HCT116 (cell line): ENCODE measurements at regions of chr11 and their contacts with region 1.

Region 1: DNA sequence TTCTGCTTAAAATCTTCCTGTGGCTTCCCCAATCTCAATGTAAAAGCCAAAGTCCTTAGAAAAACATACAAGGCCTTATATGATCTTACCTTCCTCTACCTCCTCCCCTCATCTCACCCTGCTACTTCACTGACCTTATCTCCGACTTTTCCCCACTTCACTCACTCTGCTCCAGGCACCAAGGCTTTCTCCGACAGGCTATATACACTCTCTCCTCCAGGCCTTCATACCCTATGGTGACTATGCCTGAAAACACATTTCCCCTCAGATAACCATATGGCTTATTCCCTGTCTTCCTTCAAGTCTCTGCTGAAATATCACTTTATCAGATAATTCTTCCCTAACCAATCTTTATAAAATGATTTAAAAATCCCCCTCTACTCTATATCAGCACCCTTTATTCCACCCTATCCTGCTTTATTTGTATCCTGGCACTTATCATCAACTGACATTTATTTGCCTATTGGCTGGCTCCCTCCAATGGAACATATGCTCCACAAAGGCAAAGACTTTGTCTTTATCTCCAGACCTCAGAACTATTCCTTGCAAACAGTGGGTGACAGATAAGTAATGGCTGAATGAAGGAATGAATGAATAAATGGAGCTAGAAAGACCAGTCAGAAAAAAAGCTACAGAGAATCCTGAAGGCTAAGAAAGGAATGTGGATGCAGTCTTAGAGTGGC is 52.7 kb downstream of the PAK1 start:
- DNase-seq: no peak
- ATAC-seq: no peak
- H3K4me3 ChIP-seq: no peak overlapping the region
- H3K27ac ChIP-seq: no peak overlapping the region
- H3K4me1 ChIP-seq: no peaks in the 10 kb centered on the region
- H3K27me3 ChIP-seq: no peaks in the 10 kb centered on the region
- CTCF ChIP-seq: no peak
- POLR2A ChIP-seq: no peak
- RAD21 ChIP-seq: no peak

Region 2: GRCh38 chr11:77407618-77408017 is 13.6 kb before region 1 on chr11:
- CTCF ChIA-PET with region 1: no interaction called
- POLR2A ChIA-PET with region 1: no interaction called
- RAD21 ChIA-PET with region 1: no interaction called
- intact Hi-C with region 1: no loop called
- DNase-seq: peak; percentile 51
- ATAC-seq: 0 out of 2 replicates have a peak, but pooled peaks have one; percentile 11
- H3K4me3 ChIP-seq: peak overlapping the region in 1 of 2 experiments; percentile 24; a peak in 2 of 4 replicates
- H3K27ac ChIP-seq: no peak overlapping the region
- H3K4me1 ChIP-seq: peaks cover 13 to 40% of the 10 kb centered on the region in 2 experiments; a peak in 3 of 4 replicates
- H3K27me3 ChIP-seq: no peaks in the 10 kb centered on the region
- CTCF ChIP-seq: no peak
- POLR2A ChIP-seq: no peak
- RAD21 ChIP-seq: no peak

Region 3: GRCh38 chr11:77457340-77457739 is 36.2 kb after region 1 on chr11:
- CTCF ChIA-PET with region 1: no interaction called
- POLR2A ChIA-PET with region 1: no interaction called
- RAD21 ChIA-PET with region 1: no interaction called
- intact Hi-C with region 1: loop called (anchors 5 kb)
- DNase-seq: no peak
- ATAC-seq: no peak
- H3K4me3 ChIP-seq: no peak overlapping the region
- H3K27ac ChIP-seq: no peak overlapping the region
- H3K4me1 ChIP-seq: no peaks in the 10 kb centered on the region
- H3K27me3 ChIP-seq: no peaks in the 10 kb centered on the region
- CTCF ChIP-seq: no peak
- POLR2A ChIP-seq: no peak
- RAD21 ChIP-seq: no peak